MCF 10A (cell line): ENCODE measurements at regions of chr10 and their contacts with region 1.

Region 1: DNA sequence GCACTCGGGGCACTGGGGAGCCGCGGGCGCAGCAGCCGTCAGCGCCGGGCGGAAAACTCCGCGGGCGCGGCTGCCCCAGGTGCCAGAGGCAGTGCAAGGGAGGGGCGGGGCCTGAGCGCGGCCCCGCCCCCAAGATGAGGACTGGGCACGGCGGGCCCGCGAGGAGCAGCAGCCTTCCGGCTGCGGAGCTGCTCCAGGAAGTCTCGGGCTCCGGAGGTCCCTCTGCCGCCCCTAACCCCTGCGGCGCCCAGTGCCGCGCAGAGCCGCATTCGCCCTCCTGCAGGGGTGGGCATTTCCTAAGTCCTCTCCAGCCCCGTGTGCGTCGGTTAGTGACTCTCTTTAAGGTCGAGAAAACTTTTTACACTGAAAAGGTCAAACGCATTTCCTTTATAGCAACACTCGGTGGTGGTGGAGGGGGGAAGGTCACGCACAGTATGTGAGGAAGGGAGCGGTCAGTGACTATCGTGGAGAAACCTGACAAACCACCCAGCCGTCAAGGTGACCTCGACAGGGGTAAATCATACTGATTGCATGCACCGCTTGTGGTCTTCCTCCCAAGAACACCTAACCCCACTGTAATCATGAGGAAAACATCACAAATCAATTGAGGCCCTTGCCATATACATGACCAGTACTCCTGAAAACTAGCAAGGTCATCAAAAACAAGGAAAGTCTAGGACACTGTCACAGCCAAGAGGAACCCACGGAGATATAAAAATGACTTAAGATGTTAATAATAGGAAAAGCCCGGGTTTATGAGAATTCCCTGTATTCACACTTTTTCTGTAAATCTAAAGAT is at the start of gene ANXA11:
- DNase-seq: peak; percentile 80
- H3K4me3 Mint-ChIP-seq: peak within 1 kb of the TSS; percentile 77
- H3K27ac Mint-ChIP-seq: peak within 1 kb of the TSS; percentile 88
- H3K4me1 Mint-ChIP-seq: peaks cover 40% of the 10 kb centered on the region
- H3K27me3 Mint-ChIP-seq: no peaks in the 10 kb centered on the region
- CTCF ChIP-seq: no peak
- total RNA-seq, gene ANXA11: 68.5 and 93.8 TPM in 2 replicates

Region 2: DNA sequence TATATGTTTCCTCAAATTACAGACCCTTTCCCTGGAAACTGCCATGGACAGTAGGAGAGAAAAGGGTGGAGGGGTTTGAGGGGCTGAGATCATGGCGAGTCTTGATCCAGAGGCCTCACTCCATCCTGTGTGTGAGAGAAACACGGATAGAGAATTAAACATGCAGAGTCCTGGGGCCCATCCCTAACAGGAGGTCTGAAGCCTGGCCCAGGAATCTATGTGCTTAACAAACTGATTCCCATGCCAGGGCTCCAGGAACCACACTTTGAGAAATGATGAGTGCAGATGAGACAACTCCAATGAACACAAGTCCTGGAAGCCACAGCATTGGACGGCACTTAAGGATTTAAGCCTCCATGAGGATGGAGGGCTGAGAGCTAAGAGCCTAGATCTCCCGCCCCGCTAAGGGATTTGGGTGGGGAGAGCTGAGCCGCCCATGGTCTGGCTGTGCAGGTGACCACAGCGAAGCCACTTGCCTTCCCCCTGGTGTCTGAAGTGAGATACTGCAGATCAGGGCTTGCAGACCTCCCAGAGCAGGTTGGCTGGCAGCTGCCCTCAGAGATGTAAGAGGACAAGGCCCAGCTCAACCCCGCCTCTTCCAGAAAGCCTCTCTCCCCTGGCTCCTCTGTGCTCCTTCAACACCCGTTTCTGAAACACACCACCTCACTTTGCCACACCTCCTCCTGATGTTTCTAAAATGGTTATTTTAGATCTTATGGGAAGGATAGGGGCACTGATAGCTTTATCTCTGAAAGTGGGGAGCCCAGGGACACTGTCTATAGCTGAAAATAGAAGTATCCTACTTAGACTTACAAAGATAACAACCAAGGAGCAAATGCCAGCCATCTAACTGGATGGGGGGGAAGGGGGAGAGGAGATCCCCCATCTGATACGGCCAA is 718.1 kb before region 1 on chr10:
- CTCF ChIA-PET with region 1: no interaction called
- POLR2A ChIA-PET with region 1: no interaction called
- intact Hi-C with region 1: no loop called
- DNase-seq: peak; percentile 68
- H3K4me3 Mint-ChIP-seq: no peak overlapping the region
- H3K27ac Mint-ChIP-seq: peak overlapping the region; percentile 80
- H3K4me1 Mint-ChIP-seq: peaks cover 15% of the 10 kb centered on the region
- H3K27me3 Mint-ChIP-seq: no peaks in the 10 kb centered on the region
- CTCF ChIP-seq: peak; percentile 26

Region 3: GRCh38 chr10:80078448-80079311 is 127.0 kb before region 1 on chr10 and contains the start of gene TMEM254:
- CTCF ChIA-PET with region 1: no interaction called
- POLR2A ChIA-PET with region 1: interaction called, 7 read pairs
- intact Hi-C with region 1: loop called (anchors 5 kb)
- DNase-seq: peak; percentile 83
- H3K4me3 Mint-ChIP-seq: peak within 1 kb of the TSS; percentile 82
- H3K27ac Mint-ChIP-seq: peak within 1 kb of the TSS; percentile 91
- H3K4me1 Mint-ChIP-seq: peaks cover 15% of the 10 kb centered on the region
- H3K27me3 Mint-ChIP-seq: no peaks in the 10 kb centered on the region
- CTCF ChIP-seq: no peak
- total RNA-seq, gene TMEM254: 24.7 and 31.6 TPM in 2 replicates

Region 4: DNA sequence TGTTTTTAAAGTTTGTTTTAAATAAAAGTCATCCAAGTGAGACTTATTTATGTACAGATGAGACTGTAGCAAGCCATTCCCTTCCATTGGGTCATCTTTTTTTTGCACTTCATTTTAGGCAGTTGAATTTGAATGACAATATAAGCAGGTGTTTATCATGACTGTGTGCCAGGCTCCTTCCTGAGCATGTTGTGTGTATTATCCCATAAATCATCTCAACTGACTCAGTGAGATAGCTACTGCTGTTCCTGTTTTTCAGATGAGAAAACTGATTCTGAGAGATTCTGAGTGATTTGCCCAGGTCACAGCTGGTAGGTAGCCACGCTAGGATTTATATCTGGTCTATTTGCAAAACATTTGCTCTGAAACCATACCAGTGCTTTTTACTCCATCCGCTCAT is 115.6 kb before region 1 on chr10:
- CTCF ChIA-PET with region 1: no interaction called
- POLR2A ChIA-PET with region 1: no interaction called
- intact Hi-C with region 1: no loop called
- DNase-seq: no peak
- H3K4me3 Mint-ChIP-seq: no peak overlapping the region
- H3K27ac Mint-ChIP-seq: no peak overlapping the region
- H3K4me1 Mint-ChIP-seq: no peaks in the 10 kb centered on the region
- H3K27me3 Mint-ChIP-seq: no peaks in the 10 kb centered on the region
- CTCF ChIP-seq: no peak

Region 5: DNA sequence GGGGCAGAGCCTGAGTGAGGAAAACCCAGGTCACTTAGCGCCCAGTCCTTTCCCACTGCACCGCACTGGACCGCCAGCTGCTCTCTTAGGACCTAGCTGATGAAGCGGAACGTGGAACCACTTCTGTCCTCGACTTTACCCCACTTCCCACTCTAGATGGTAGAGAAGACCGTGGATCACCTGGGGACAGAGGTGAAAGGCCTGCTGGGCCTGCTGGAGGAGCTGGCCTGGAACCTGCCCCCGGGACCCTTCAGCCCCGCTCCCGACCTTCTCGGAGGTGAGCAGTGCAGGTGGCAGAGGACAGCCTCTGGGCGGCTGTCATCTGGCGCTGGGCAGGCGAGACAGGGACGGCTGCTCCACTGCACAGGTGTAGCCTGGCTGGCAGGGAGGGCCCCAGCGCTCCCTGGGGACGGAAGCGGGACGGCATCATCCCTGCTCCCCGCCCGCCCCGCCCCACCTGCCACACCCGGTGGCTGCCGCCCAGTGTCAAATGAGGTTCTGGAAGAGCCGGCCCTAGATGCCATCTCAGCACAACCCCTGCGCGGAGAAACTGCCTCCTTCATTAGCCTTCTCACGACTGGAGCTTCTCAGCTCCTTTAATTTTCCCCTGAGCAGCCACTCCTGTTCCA is 61.5 kb before region 1 on chr10:
- CTCF ChIA-PET with region 1: interaction called, 11 read pairs
- POLR2A ChIA-PET with region 1: interaction called, 8 read pairs
- intact Hi-C with region 1: loop called (anchors 1 kb)
- DNase-seq: peak; percentile 36
- H3K4me3 Mint-ChIP-seq: no peak overlapping the region
- H3K27ac Mint-ChIP-seq: no peak overlapping the region
- H3K4me1 Mint-ChIP-seq: peaks cover 16% of the 10 kb centered on the region
- H3K27me3 Mint-ChIP-seq: no peaks in the 10 kb centered on the region
- CTCF ChIP-seq: no peak

Region 6: GRCh38 chr10:80158598-80159127 is 47.0 kb before region 1 on chr10:
- CTCF ChIA-PET with region 1: interaction called, 5 read pairs
- POLR2A ChIA-PET with region 1: interaction called, 31 read pairs
- intact Hi-C with region 1: loop called (anchors 2 kb)
- DNase-seq: peak; percentile 98
- H3K4me3 Mint-ChIP-seq: no peak overlapping the region
- H3K27ac Mint-ChIP-seq: peak overlapping the region; percentile 55
- H3K4me1 Mint-ChIP-seq: peaks cover 58% of the 10 kb centered on the region
- H3K27me3 Mint-ChIP-seq: no peaks in the 10 kb centered on the region
- CTCF ChIP-seq: no peak

Region 7: GRCh38 chr10:80163741-80164341 is 41.8 kb before region 1 on chr10:
- CTCF ChIA-PET with region 1: interaction called, 4 read pairs
- POLR2A ChIA-PET with region 1: interaction called, 31 read pairs
- intact Hi-C with region 1: loop called (anchors 2 kb)
- DNase-seq: peak; percentile 90
- H3K4me3 Mint-ChIP-seq: peak overlapping the region; percentile 14
- H3K27ac Mint-ChIP-seq: peak overlapping the region; percentile 83
- H3K4me1 Mint-ChIP-seq: peaks cover 54% of the 10 kb centered on the region
- H3K27me3 Mint-ChIP-seq: no peaks in the 10 kb centered on the region
- CTCF ChIP-seq: no peak

Region 8: GRCh38 chr10:80177781-80178540 is 27.7 kb before region 1 on chr10:
- CTCF ChIA-PET with region 1: no interaction called
- POLR2A ChIA-PET with region 1: interaction called, 10 read pairs
- intact Hi-C with region 1: no loop called
- DNase-seq: peak; percentile 76
- H3K4me3 Mint-ChIP-seq: peak overlapping the region; percentile 4
- H3K27ac Mint-ChIP-seq: peak overlapping the region; percentile 25
- H3K4me1 Mint-ChIP-seq: peaks cover 31% of the 10 kb centered on the region
- H3K27me3 Mint-ChIP-seq: no peaks in the 10 kb centered on the region
- CTCF ChIP-seq: no peak

Region 9: GRCh38 chr10:80191589-80192255 is 14.0 kb before region 1 on chr10:
- CTCF ChIA-PET with region 1: interaction called, 4 read pairs
- POLR2A ChIA-PET with region 1: interaction called, 16 read pairs
- intact Hi-C with region 1: no loop called
- DNase-seq: peak; percentile 83
- H3K4me3 Mint-ChIP-seq: no peak overlapping the region
- H3K27ac Mint-ChIP-seq: no peak overlapping the region
- H3K4me1 Mint-ChIP-seq: peaks cover 27% of the 10 kb centered on the region
- H3K27me3 Mint-ChIP-seq: no peaks in the 10 kb centered on the region
- CTCF ChIP-seq: no peak

Region 10: GRCh38 chr10:80632742-80633141 is 427.1 kb after region 1 on chr10:
- CTCF ChIA-PET with region 1: no interaction called
- POLR2A ChIA-PET with region 1: no interaction called
- intact Hi-C with region 1: no loop called
- DNase-seq: no peak
- H3K4me3 Mint-ChIP-seq: no peak overlapping the region
- H3K27ac Mint-ChIP-seq: no peak overlapping the region
- H3K4me1 Mint-ChIP-seq: no peaks in the 10 kb centered on the region
- H3K27me3 Mint-ChIP-seq: no peaks in the 10 kb centered on the region
- CTCF ChIP-seq: no peak